ENCODE measurements at regions of chr12 and their contacts with region 1.

Region 1: DNA sequence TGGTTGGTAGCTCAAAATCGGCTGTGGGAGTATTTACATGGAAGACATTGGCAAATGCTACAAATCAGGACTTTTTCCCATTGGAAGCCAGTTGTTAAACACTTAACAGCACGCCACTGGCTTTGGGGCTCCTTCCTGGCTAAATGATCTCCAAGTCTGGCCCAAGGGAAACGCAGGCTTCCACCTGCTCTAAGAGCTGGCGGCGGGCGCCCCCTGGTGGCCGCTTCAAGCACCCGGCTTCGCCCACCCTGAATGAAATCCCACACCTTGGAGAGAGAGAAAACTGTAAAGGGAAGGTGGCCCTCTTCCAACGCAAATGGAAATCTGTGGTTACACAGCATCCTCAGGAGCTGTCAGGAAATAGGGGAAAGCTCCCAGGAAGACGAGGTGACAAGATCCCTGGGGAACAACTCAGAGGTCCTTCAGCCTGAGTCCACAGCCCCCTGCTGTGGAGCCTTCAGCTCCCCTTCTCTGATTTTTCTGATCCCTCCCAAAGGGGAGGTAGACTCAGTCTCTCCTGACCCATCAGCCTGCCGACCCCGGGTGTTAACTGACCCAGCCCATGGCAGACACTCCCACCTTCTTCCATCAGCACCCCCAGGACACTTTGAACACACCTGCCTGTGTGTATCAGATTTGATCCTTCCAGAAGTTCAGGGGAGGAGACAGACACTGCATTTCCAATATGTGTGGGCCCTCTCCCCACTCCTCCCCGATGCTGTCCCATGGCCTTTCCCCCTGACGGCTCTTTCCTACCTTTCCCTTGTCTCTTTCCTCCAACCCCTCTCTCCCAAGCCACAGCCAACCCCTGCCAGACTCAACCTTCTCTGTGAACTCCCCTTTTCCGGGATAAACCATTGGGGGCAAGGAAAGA is 15.4 kb downstream of the SELPLG start:
- DNase-seq: peak; percentile 81
- H3K4me3 Mint-ChIP-seq: no peak overlapping the region
- H3K27ac Mint-ChIP-seq: peak overlapping the region; percentile 20
- H3K4me1 Mint-ChIP-seq: peaks cover 36% of the 10 kb centered on the region
- H3K27me3 Mint-ChIP-seq: no peaks in the 10 kb centered on the region

Region 2: DNA sequence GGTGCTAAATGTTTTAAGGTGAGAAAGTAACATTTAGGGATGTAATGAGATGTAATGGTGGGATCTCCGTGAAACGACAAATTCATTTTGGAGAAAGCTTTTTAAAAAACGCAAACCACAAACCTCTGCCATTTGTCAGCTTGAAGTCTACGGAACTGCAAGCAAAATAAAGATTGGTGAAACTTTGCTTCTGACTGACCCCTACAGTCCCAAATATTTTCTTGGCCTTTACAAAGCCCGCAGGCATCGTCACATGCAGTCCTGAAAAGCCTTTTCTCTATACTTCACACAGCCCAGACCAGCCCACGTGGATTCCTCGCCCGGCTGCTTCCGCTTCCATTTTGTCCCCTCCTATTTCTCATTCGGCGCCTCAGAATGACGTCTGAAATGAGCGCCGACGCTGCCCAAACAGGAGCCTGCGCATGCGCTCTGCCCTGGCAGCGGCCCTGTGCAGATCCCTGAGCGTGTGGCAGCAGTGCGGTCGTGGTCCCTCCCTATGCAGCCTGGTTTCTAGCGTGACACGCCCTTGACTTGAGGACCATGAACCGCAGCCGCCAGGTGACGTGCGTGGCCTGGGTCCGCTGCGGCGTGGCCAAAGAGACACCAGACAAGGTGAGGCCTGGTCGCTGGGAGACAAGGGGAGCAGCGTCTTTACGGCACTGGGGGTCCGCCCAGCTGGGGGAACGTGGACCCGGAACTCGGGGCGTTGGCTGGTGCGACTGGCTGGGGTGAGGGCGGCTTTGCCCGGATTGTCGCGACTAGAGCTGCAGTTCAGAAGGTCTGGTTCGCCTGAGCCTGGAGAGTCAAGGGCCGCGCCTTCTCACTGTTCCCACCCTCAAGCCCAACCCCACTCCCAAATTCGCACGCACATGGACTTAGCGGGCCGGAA is 932.7 kb before region 1 on chr12 and contains the start of gene PWP1:
- CTCF ChIA-PET with region 1: no interaction called
- intact Hi-C with region 1: loop called (anchors 5 kb)
- DNase-seq: peak; percentile 95
- H3K4me3 Mint-ChIP-seq: peak within 1 kb of the TSS; percentile 90
- H3K27ac Mint-ChIP-seq: peak within 1 kb of the TSS; percentile 95
- H3K4me1 Mint-ChIP-seq: peaks cover 20% of the 10 kb centered on the region
- H3K27me3 Mint-ChIP-seq: no peaks in the 10 kb centered on the region
- total RNA-seq, gene PWP1: 35.0 to 37.1 TPM

Region 3: DNA sequence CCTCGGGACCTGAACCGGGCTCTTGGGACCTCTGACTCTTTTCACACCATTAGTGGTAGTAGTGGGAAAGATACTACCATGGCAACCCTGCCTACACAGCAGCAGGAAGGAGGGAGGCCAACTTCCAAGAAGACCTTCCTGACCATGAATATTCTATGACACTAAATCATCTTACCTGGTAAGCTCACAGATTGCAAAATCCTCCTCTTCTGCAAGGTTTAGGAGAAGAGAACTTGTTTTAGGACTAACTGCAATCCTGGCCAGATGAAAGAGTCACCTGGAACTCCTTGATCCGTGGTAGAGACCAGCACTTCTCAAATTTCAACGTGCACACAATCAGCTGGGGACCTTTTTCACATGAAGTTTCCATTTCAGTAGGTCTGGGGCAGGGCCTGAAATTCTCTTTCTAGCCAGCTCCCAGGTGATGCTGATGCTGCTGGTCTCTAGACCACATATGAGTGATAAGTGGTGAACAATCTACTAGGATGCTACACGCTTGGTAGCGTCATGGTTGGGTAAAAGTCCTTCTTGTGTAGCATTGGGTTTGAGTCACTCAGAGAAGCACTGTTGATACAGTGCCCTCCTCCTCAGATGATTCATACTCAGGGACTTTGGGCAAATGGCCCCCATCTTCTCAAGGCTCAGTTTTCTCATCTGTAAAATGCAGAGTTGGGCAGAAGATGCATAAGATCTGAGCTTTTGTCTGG is 138.8 kb before region 1 on chr12:
- CTCF ChIA-PET with region 1: no interaction called
- intact Hi-C with region 1: no loop called
- DNase-seq: no peak
- H3K4me3 Mint-ChIP-seq: no peak overlapping the region
- H3K27ac Mint-ChIP-seq: no peak overlapping the region
- H3K4me1 Mint-ChIP-seq: no peaks in the 10 kb centered on the region
- H3K27me3 Mint-ChIP-seq: peaks cover 9% of the 10 kb centered on the region

Region 4: GRCh38 chr12:108568338-108569154 is 49.8 kb before region 1 on chr12:
- CTCF ChIA-PET with region 1: interaction called, 306 read pairs
- intact Hi-C with region 1: loop called (anchors 1 kb)
- DNase-seq: peak; percentile 89
- H3K4me3 Mint-ChIP-seq: peak overlapping the region; percentile 30
- H3K27ac Mint-ChIP-seq: peak overlapping the region; percentile 91
- H3K4me1 Mint-ChIP-seq: peaks cover 90% of the 10 kb centered on the region
- H3K27me3 Mint-ChIP-seq: no peaks in the 10 kb centered on the region

Region 5: GRCh38 chr12:108589028-108589839 is 29.1 kb before region 1 on chr12:
- CTCF ChIA-PET with region 1: interaction called, 10 read pairs
- intact Hi-C with region 1: no loop called
- DNase-seq: no peak
- H3K4me3 Mint-ChIP-seq: no peak overlapping the region
- H3K27ac Mint-ChIP-seq: no peak overlapping the region
- H3K4me1 Mint-ChIP-seq: no peaks in the 10 kb centered on the region
- H3K27me3 Mint-ChIP-seq: no peaks in the 10 kb centered on the region

Region 6: GRCh38 chr12:108691175-108691997 is 73.1 kb after region 1 on chr12:
- CTCF ChIA-PET with region 1: interaction called, 4 read pairs
- intact Hi-C with region 1: loop called (anchors 1 kb)
- DNase-seq: peak; percentile 92
- H3K4me3 Mint-ChIP-seq: peak overlapping the region; percentile 55
- H3K27ac Mint-ChIP-seq: peak overlapping the region; percentile 80
- H3K4me1 Mint-ChIP-seq: peaks cover 77% of the 10 kb centered on the region
- H3K27me3 Mint-ChIP-seq: peaks cover 2% of the 10 kb centered on the region

Region 7: GRCh38 chr12:108950991-108951739 is 332.8 kb after region 1 on chr12:
- CTCF ChIA-PET with region 1: interaction called, 7 read pairs
- intact Hi-C with region 1: loop called (anchors 5 kb)
- DNase-seq: peak; percentile 82
- H3K4me3 Mint-ChIP-seq: no peak overlapping the region
- H3K27ac Mint-ChIP-seq: no peak overlapping the region
- H3K4me1 Mint-ChIP-seq: no peaks in the 10 kb centered on the region
- H3K27me3 Mint-ChIP-seq: no peaks in the 10 kb centered on the region

Region 8: DNA sequence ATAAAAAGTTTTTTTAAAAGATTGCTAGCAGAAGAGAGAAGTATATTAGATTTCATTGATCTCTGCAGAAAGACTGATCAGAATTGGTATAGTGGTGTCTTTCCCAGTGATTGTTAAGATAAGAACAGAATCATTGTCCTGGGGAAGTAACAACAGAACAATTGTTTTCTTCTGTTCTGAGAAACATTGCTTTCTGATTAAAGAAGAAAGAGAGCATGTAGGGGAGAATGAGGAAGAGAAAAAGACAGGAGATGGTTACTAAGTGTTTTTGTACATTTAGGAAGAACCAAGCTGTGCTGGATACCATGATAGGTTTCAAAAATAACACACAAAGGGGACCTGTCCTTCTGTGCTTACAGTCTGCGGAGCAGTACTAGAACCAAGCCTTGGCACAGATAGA is 439.1 kb after region 1 on chr12:
- CTCF ChIA-PET with region 1: no interaction called
- intact Hi-C with region 1: no loop called
- DNase-seq: no peak
- H3K4me3 Mint-ChIP-seq: no peak overlapping the region
- H3K27ac Mint-ChIP-seq: no peak overlapping the region
- H3K4me1 Mint-ChIP-seq: peaks cover 4% of the 10 kb centered on the region
- H3K27me3 Mint-ChIP-seq: no peaks in the 10 kb centered on the region

Region 9: DNA sequence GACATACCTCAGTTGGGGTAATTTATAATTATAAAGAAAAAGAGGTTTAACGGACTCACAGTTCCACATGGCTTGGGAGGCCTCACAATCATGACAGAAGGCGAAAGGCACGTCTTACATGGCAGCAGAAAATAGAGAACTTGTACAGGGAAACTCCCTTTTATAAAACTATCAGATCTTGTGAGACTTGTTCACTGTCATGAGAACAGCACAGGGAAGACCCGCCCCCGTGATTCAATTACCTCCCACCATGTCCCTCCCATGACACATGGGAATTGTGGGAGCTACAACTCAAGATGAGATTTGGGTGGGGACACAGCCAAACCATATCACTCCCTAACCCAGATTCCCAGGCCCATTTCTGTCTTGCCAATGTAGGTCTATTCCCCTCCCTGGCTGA is 751.5 kb after region 1 on chr12:
- CTCF ChIA-PET with region 1: no interaction called
- intact Hi-C with region 1: no loop called
- DNase-seq: no peak
- H3K4me3 Mint-ChIP-seq: no peak overlapping the region
- H3K27ac Mint-ChIP-seq: no peak overlapping the region
- H3K4me1 Mint-ChIP-seq: no peaks in the 10 kb centered on the region
- H3K27me3 Mint-ChIP-seq: peaks cover 18% of the 10 kb centered on the region

Measured in activated naive CD4-positive, alpha-beta T cell treated with anti-CD3 and anti-CD28 coated beads for 36 hours (primary cell).